BJ (cell line): ENCODE measurements at regions of chr4 and their contacts with region 1.

Region 1: GRCh38 chr4:147731580-147732517 is at the start of gene ARHGAP10:
- DNase-seq: no peak
- H3K4me3 ChIP-seq: peak within 1 kb of the TSS; percentile 62
- H3K27me3 ChIP-seq: no peaks in the 10 kb centered on the region
- CTCF ChIP-seq: no peak
- polyA plus RNA-seq, gene ARHGAP10: 17.6 and 20.2 TPM in 2 replicates

Region 2: DNA sequence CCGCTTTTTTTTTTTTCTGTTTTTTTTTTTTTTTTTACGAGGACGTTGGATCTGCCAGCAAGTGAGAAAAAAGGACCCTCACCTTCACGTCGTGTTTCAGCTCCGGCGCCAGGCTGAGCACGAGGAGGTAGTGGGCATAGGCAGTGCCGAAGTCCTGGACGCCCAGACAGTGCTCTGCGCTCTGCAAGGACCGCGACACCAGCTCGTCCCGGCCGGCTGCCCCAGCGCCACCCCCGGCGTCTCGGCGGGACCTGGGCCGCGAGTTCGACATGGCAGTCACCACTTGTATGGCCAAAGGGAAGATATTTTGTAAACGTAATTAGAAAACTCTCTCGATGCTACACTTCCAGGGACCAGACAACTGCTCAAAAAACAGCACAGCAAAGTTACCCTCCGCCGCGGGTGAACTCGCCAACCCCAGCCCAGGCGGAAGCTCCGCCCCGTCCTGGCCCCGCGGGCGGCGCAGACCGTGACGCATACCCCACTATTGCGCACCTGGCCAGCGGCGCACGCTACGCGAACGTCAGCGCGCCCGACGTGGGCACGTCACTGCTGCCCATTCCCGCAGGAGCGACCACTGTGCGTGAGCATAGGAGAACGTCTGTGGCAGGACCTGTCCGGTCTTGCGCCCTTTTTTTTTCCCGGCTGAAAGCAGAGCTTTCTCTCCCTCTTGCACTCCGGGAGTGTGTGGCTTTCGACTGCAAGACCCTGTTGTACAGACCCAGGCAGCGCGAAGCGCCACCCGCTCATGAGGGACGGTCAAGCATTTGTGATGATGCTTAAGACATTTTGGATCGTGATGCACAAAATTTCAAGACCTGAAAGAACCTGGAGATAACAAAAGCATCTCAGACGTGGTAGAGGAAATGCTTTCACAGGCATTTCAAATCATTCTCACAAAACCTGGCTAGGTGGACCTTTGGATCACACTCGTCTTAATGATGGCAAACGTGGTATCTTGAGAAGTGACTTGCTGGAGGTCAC is 47.8 kb before region 1 on chr4 and contains the start of gene PRMT9:
- CTCF ChIA-PET with region 1: no interaction called
- POLR2A ChIA-PET with region 1: no interaction called
- DNase-seq: peak; percentile 33
- H3K4me3 ChIP-seq: peak within 1 kb of the TSS; percentile 78
- H3K27me3 ChIP-seq: no peaks in the 10 kb centered on the region; the same call in 1 of the 2 replicates
- CTCF ChIP-seq: no peak
- polyA plus RNA-seq, gene PRMT9: 3.3 and 6.4 TPM in 2 replicates

Region 3: DNA sequence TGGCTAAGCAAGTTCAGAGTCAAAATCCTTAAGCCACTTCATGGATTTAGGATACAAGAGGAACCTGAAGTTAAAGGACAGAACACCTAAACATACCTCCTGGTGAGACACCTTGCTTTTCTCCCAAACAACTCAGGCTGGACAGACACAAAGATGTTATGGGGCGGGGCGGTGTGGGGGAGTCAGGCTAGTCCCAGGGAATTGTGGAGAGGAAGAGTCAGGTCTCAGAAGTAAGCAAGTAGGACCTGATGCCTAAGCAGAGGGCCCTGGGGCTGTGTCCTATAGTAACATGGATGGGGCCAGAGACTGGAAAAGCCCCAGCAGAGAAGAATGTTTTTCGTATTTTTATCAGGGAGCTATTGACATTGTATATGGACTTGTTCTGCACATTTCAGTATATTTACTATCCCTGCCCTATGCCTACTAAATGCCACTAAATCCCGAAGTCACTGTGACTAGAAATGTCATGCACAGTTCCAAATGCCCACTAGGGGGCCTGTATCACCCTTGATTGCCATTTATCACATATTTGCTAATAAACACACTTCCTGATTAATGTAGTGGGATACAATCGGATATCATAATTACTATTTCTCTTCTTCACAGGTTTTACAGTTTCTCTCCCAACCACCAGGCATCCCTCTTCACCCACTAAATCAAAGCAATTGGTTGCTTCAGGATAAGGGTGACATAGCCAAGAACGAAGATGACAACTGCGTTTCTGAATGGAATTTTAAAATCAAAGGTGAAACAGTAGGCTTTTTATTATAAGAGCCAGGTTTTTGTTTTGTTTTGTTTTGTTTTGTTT is 23.8 kb before region 1 on chr4:
- CTCF ChIA-PET with region 1: interaction called, 12 read pairs
- POLR2A ChIA-PET with region 1: no interaction called
- DNase-seq: no peak
- H3K4me3 ChIP-seq: no peak overlapping the region
- H3K27me3 ChIP-seq: no peaks in the 10 kb centered on the region
- CTCF ChIP-seq: peak; percentile 85

Region 4: DNA sequence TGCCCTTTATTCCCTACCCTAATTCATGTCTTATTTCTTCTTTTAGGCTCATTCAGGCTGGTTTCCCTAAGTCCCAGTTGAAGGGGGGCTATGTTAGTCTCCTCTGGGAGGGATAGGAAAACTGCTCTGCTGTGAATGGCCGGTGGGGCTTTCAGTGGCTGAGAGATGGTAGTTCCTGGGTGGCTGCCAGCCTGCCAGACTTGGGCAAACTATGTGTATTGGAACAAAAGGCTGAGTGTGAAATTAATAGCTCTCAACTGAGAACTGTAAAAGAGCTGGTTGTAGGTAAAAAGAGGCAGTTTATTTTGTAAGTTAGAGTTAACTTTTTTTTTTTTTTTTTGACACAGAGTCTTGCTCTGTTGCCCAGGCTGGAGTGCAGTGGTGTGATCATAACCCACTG is 28.8 kb after region 1 on chr4:
- CTCF ChIA-PET with region 1: no interaction called
- POLR2A ChIA-PET with region 1: no interaction called
- DNase-seq: no peak
- H3K4me3 ChIP-seq: no peak overlapping the region
- H3K27me3 ChIP-seq: no peaks in the 10 kb centered on the region
- CTCF ChIP-seq: no peak